KBM-7 (cell line): ENCODE measurements at regions of chr2 and their contacts with region 1.

Region 1: DNA sequence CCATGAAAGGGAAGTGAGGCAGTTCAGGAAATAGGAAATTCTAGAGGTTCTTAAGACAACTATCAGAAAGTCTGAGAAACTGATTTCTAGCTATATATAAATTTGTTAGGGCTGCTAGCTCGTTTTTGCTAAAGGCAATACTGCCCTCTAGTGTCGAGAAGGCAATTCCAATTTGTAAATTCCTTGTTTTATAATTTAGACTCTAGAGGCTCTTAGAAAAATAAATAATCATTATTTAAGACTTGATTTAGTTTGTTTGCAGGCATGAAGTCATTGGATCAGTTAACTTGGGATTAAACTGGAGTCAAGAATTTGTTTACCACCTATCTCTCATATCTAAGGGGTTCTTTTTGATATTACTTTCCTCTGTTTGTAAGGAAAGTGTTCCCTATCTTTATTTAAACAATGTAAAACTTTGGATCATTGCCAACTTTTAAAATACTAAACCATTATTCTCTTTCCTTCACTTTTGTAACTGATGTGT is 66.2 kb downstream of the ACVR2A start:
- DNase-seq: peak; percentile 72

Region 2: DNA sequence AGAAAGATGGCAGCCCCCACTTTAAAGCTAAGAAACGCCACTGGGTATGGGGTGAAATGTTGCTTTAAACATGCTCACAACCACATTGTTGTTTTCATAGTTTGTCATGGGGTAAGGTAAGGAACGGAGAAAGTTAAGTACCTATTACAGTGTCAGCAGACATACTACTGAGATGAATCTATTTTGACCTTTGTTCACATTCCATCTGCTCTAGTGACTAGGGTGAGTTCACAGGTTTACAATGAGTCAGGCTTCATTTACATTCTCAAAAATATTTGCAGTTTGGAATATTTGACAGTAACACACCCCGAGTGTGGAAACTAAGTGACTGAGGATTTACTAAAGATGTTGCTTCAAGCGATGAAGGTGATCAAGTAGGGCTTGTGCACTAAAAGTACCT is 494.9 kb before region 1 on chr2:
- in situ Hi-C with region 1: loop called (anchors 25 kb)
- DNase-seq: no peak